ENCODE measurements at regions of chr1 and their contacts with region 1.

Region 1: GRCh38 chr1:32335790-32336590 is at the start of gene MARCKSL1:
- DNase-seq: no peak
- H3K4me3 ChIP-seq: peak within 1 kb of the TSS; percentile 77
- CTCF ChIP-seq: no peak

Region 2: DNA sequence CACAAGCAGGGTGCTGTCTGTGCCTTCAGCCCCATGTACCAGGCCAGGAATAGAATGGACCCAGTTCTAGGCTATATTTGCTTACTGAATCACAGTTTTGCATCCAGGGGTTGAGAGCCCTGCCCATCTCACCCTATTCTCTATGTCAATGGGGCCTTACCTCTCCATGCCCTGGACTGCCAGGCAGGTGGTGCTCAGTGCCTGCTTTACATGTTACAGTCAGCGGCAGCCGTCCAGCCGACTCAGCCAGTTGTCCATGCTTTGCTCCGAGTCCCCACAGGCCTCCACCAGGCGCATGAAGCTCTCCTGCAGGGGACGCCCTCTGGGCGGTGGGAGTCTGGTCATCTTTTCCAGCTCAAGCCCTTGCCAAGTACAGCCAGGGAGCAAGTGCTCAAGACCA is 101.2 kb before region 1 on chr1:
- CTCF ChIA-PET with region 1: no interaction called
- POLR2A ChIA-PET with region 1: interaction called, 13 read pairs
- DNase-seq: no peak
- H3K4me3 ChIP-seq: no peak overlapping the region
- CTCF ChIP-seq: no peak

Region 3: DNA sequence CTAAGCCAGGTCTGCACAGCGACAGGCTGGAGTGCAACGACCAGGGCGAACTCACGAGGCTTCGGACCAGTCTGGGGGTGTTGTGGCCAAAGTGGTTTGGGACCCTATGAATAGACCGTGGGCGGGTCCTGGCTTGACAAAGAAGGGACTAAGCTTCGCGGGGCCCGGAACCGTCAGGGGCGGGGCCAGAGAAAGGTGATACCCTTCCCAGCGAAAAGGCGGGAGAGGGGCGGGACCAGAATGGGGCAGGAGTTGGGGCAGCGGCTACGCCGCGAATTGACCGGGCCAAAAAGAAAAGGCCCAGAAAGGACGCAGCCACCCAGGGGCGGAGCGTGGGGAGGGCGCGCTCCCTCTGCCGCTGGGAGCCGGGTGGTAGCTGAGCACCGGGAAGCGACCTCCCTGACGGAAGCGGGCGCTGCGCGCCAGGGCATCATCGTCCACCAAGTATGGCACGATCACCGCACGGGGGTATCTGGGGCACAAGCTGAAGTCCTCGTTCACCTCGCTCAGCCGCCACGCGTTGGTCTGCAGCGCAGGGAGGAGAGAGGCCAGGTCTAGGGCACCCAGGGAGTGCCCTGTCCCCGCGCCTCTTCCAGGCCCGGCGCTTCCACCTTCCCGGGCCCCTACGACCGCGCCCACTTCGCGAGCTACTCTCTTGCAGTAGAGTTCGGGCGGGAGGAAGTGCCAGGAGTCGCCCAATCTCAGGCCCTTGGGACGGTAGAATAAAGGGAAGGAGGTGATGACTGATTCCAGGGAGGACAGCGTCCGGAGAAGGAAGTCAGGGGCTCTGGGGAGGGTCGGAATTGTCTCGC is 95.6 kb before region 1 on chr1:
- CTCF ChIA-PET with region 1: no interaction called
- POLR2A ChIA-PET with region 1: interaction called, 17 read pairs
- DNase-seq: no peak
- H3K4me3 ChIP-seq: peak overlapping the region; percentile 67
- CTCF ChIP-seq: peak; percentile 37

Region 4: GRCh38 chr1:32291708-32292492 is 44.1 kb before region 1 on chr1 and contains the start of gene HDAC1:
- CTCF ChIA-PET with region 1: interaction called, 3 read pairs
- POLR2A ChIA-PET with region 1: interaction called, 21 read pairs
- DNase-seq: peak; percentile 49
- H3K4me3 ChIP-seq: peak within 1 kb of the TSS; percentile 97
- CTCF ChIP-seq: no peak

Region 5: DNA sequence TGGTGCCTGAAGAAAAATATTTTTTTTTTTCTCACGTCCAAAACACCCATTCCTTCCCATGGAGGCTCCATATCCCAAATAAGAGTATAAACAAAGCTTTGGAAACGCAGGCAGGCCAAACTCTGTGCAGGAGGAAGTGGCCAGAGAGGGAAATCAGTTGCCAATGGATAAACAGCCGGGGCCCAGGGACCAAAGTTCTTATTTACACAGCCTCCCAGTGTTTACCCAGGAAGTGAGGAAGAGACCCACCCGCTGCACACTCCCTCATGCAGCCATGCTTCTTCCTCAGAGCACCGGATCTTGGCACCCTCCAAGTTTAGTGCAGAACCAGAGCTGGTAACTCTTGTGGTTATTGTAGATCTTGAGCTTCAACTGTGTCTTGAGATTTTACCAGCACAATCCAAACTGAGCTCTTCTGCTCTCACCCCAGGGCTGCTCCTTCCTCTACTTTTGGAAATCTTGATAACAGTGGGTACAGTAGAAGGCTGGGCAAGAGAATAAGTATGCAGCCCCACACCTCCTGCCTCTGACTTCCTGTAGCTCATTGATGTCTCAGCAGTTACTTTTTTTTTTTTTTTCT is 14.2 kb before region 1 on chr1:
- CTCF ChIA-PET with region 1: interaction called, 19 read pairs
- POLR2A ChIA-PET with region 1: interaction called, 20 read pairs
- DNase-seq: no peak
- H3K4me3 ChIP-seq: no peak overlapping the region
- CTCF ChIP-seq: no peak

Region 6: GRCh38 chr1:32351399-32352238 is 15.6 kb after region 1 on chr1:
- CTCF ChIA-PET with region 1: interaction called, 15 read pairs
- POLR2A ChIA-PET with region 1: interaction called, 38 read pairs
- DNase-seq: peak; percentile 44
- H3K4me3 ChIP-seq: peak overlapping the region; percentile 71
- CTCF ChIP-seq: peak; percentile 8

Region 7: GRCh38 chr1:32394141-32394889 is 58.3 kb after region 1 on chr1 and contains the start of gene BSDC1:
- CTCF ChIA-PET with region 1: interaction called, 3 read pairs
- POLR2A ChIA-PET with region 1: interaction called, 15 read pairs
- DNase-seq: peak; percentile 76
- H3K4me3 ChIP-seq: peak within 1 kb of the TSS; percentile 95
- CTCF ChIP-seq: no peak